Transverse colon (tissue), 4 donors: ENCODE measurements at regions of chr2 and their contacts with region 1.

Region 1: DNA sequence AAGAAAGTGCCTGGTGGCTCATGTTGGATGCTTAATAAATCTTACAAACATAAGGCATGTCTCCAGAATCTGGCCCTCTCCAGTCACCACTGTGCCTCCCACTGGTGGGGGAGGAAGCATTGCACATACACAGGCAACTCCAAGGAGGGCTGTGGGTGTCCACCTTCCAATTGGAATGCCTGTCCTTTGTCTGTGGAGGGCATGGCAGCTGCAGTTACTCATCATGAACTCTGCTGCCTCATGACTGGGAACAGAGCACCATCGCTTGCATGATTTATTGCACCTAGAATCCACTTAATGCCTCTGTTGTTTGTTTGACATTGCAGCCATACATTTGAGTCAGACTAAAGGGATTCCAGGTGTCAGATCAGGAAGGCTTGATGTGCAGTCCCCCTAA is 278.9 kb downstream of the PRKCE start:
- DNase-seq: no peak
- H3K4me3 ChIP-seq: no peak overlapping the region
- H3K27ac ChIP-seq: peak overlapping the region in 3 of 4 donors; percentile 7 to 11 (median 10)
- H3K4me1 ChIP-seq: peaks cover 0 to 5% (median 1%) of the 10 kb centered on the region in 4 donors
- H3K27me3 ChIP-seq: no peaks in the 10 kb centered on the region
- CTCF ChIP-seq: no peak
- EP300 ChIP-seq: no peak
- POLR2A ChIP-seq: no peak

Region 2: GRCh38 chr2:45650851-45651414 is 279.5 kb before region 1 on chr2:
- in situ Hi-C with region 1: loop called (anchors 5 to 10 kb)
- intact Hi-C with region 1: no loop called
- DNase-seq: peak; percentile 95
- H3K4me3 ChIP-seq: peak overlapping the region; percentile 81 to 96 (median 90)
- H3K27ac ChIP-seq: peak overlapping the region; percentile 97 to 100 (median 99)
- H3K4me1 ChIP-seq: peaks cover 15 to 41% (median 29%) of the 10 kb centered on the region in 4 donors
- H3K27me3 ChIP-seq: no peaks in the 10 kb centered on the region
- CTCF ChIP-seq: peak; percentile 16 to 76 (median 39)
- EP300 ChIP-seq: peak; percentile 74
- POLR2A ChIP-seq: peak; percentile 93